ENCODE measurements at regions of chr14 and their contacts with region 1.

Region 1: GRCh38 chr14:26394150-26394810 is 203.6 kb downstream of the NOVA1 start:
- DNase-seq: no peak
- H3K4me3 ChIP-seq: no peak overlapping the region
- H3K27ac ChIP-seq: no peak overlapping the region
- H3K27me3 ChIP-seq: no peaks in the 10 kb centered on the region
- CTCF ChIP-seq: peak; percentile 34

Region 2: GRCh38 chr14:26454105-26454504 is 59.8 kb after region 1 on chr14:
- CTCF ChIA-PET with region 1: interaction called, 11 read pairs
- POLR2A ChIA-PET with region 1: no interaction called
- DNase-seq: no peak
- H3K4me3 ChIP-seq: no peak overlapping the region
- H3K27ac ChIP-seq: no peak overlapping the region
- H3K27me3 ChIP-seq: no peaks in the 10 kb centered on the region
- CTCF ChIP-seq: no peak

Region 3: DNA sequence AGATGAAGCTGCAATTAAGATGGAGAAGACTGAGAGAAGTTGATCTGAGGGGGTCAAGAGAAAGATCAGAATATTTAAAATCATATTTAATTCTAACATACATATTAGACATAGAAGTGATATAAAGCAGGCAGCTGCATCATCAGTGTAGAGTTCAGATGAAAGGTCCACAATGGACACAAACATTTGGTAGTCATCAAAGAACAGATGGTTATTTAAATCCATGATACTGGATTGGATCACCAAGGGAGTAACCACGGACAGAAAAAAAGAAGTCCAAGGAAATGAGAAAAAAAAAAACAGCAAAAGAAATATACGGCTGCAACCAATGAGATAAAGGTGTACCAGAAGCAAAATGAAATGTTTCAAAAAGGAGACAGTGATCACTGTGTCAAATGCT is 183.4 kb after region 1 on chr14:
- CTCF ChIA-PET with region 1: interaction called, 11 read pairs
- POLR2A ChIA-PET with region 1: no interaction called
- DNase-seq: no peak
- H3K4me3 ChIP-seq: no peak overlapping the region
- H3K27ac ChIP-seq: no peak overlapping the region
- H3K27me3 ChIP-seq: no peaks in the 10 kb centered on the region
- CTCF ChIP-seq: no peak

Region 4: DNA sequence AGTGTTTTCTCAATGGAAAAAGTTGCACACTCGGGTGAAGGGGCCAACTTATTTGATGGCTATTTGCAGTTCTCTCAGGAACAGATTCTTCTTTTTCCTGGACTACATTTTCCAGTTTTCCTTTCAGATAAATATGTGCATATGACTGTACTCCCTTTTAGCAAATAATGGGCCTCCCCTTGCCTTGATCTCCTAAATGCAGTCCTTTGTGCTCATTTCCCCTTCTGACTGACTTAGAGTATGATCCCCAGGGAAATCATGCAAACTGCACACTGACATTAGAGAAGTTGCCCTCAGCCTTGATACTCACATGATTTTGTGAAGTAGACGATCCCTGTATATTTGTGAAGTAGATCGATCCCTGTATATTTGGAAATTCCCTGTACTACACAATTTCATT is 696.4 kb after region 1 on chr14:
- CTCF ChIA-PET with region 1: no interaction called
- POLR2A ChIA-PET with region 1: no interaction called
- DNase-seq: no peak
- H3K4me3 ChIP-seq: no peak overlapping the region
- H3K27ac ChIP-seq: no peak overlapping the region
- H3K27me3 ChIP-seq: no peaks in the 10 kb centered on the region
- CTCF ChIP-seq: no peak

Measured in AG04450 (cell line).